ENCODE measurements at regions of chr17 and their contacts with region 1.

Region 1: GRCh38 chr17:73371285-73371684 is 59.5 kb upstream of the CDC42EP4 start:
- DNase-seq: no peak
- CTCF ChIP-seq: no peak

Region 2: DNA sequence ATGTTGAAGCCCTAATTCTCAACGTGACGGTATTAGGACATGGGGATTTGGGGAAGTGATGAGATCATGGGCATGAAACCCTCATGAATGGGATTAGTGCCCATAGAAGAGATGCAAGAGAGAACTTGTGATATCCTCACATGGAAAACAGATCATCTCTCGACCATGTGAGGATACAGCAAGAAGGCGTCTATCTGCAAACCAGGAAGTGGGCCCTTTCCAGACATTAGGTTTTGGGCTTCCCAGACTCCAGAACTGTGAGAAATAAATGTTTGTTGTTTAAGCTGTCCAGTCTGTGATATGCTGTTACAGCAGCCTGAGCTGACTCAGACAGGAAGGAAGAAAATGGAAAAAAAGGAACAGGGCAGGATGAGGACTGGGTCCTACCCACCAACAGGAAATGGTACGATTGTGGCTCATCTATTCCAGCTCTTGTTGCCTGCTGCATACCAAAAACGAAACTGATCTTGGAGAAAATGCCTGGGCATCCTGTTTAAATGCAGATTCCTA is 228.4 kb before region 1 on chr17:
- CTCF ChIA-PET with region 1: no interaction called
- POLR2A ChIA-PET with region 1: no interaction called
- DNase-seq: no peak
- CTCF ChIP-seq: no peak

Region 3: GRCh38 chr17:73192894-73193701 is 178.2 kb before region 1 on chr17 and contains the start of gene COG1:
- CTCF ChIA-PET with region 1: interaction called, 22 read pairs
- POLR2A ChIA-PET with region 1: no interaction called
- DNase-seq: peak; percentile 96
- CTCF ChIP-seq: no peak

Region 4: GRCh38 chr17:73228748-73229236 is 142.5 kb before region 1 on chr17:
- CTCF ChIA-PET with region 1: interaction called, 11 read pairs
- POLR2A ChIA-PET with region 1: no interaction called
- DNase-seq: peak; percentile 47
- CTCF ChIP-seq: no peak

Region 5: DNA sequence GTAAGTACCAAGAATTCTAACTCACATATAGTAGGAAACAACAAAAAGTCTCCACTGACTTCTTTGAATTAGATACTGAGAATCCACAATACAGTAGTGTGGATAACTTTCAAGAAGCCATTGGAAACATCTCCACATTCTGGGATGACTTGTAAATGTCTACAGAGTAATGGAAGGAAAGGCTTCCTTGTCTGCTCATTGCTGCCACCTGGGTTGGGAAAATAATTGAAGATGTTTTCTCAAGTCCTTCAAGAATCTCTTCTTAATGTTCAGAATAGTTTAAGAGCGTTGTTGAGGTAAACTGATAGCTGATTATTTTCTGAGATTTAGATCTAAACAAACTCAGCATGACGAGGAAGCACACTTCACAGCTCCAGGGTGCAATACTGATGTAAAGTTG is 123.6 kb before region 1 on chr17:
- CTCF ChIA-PET with region 1: interaction called, 220 read pairs
- POLR2A ChIA-PET with region 1: no interaction called
- DNase-seq: no peak
- CTCF ChIP-seq: peak; percentile 31

Region 6: DNA sequence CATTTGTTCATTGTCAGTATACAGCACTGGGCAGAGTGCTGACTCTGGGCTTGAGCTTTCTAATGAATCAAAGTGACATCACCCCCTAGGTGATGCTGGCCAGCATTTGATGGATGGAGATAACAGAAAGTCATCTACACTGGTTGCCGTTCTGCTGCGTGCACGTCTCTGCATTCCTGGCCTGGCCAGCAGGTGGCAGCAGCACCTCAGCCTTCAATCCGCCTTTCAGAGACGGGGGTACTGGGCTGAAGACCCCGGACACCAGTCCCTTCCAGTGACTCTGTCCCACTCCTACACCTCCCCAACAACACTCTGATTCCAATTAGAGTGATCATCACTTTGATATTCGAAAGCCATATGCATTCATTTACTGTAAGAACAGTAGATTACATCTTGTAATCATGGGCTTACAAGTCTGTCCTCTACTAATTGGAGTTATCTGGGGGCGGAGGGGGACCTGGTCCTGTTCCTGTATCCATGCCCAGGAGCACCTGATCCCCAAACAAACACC is 115.6 kb before region 1 on chr17:
- CTCF ChIA-PET with region 1: interaction called, 220 read pairs
- POLR2A ChIA-PET with region 1: no interaction called
- DNase-seq: peak; percentile 69
- CTCF ChIP-seq: peak; percentile 96

Region 7: DNA sequence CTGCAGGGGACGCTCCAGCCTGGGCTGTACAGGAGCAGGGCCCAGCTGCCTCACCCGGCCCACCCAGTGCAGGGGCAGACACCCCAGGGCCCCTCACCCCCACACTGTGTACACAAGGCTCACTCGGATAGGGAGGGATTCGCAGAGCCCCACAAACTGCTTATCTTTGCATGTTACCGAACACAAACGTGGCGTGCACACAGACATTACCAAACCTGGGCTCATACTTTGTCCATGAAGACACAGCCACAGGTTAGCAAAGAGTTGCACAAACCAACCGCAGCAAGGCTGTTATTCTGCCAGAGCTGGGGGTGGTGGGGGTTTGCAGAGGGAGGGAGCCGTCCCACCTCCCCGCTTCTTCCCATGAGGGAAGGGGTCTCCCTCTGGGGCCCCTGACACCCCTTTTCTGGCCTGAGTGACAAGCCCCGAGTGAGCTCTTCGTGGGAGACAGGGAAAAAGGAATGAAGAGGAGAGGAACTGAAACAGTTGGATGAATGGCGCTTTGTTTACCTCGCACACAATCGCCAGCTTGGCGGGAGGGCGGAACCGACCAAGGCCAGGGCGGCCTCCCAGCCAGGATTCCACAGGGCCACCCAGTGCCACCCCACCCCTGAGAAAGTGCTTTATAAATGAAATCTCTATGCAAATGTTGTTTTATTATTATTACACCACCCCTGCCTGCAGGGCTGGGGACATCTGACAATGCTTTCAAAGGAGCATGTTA is 109.2 kb before region 1 on chr17:
- CTCF ChIA-PET with region 1: interaction called, 220 read pairs
- POLR2A ChIA-PET with region 1: no interaction called
- DNase-seq: no peak
- CTCF ChIP-seq: no peak

Region 8: GRCh38 chr17:73595479-73595878 is 224.2 kb after region 1 on chr17:
- CTCF ChIA-PET with region 1: no interaction called
- POLR2A ChIA-PET with region 1: no interaction called
- DNase-seq: peak; percentile 56
- CTCF ChIP-seq: no peak

Region 9: DNA sequence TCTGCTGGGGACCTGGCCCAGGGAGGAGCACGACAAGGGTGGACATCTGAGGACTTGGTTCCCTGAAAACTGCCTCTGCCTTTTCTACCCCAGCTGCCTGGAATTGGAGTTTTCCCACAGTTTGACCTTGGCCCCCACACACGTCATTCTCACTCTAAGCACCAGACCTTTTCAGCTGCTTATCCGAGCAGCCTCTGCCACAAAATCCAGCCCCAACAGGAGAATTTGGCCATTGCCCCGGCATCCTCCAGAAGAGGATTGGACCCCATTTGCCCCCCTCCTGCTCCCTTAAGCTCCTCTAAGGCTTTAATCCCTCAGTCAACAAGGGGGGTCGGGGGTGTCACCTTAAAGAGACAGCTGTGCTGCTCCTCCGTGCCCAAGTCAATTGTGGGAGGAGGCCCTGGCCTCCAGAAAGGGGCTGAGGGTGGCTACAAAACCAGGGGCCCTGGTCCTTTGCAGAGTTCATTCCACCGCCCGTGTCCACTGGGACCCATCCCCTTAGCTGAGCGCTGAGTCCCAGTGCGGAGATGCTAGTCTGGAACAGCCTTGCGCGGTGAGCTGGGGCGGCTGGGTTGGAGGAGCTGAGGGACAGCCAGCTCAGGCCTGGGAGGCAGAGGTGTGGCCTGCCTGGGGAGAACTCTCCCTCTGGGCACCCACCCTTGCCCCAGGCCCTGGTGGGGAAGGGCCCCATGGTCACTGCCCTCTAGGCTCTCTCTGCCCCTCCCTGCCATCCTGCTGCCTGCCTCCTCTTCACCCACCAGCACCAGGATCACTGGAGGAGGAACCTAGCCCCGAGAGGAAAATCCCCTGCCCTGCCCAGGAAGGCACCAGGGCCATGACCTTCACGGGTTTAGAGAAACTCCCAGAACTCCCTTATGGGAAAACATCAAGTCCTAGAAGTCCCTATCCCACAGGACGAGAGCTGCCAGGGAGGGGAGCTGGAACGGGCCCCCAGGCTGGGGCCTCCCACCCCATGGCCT is 860.9 kb after region 1 on chr17:
- CTCF ChIA-PET with region 1: no interaction called
- POLR2A ChIA-PET with region 1: no interaction called
- DNase-seq: no peak
- CTCF ChIP-seq: no peak